H1 (cell line): ENCODE measurements at regions of chr13 and their contacts with region 1.

Region 1: GRCh38 chr13:112366907-112367646 is 9.1 kb upstream of the SPACA7 start:
- DNase-seq: no peak
- H3K4me3 ChIP-seq: no peak overlapping the region
- H3K27ac ChIP-seq: no peak overlapping the region
- H3K4me1 ChIP-seq: peaks cover 0 to 8% (median 4%) of the 10 kb centered on the region in 4 experiments; a peak in 5 of 7 replicates
- H3K27me3 ChIP-seq: no peaks in the 10 kb centered on the region
- CTCF ChIP-seq: peak in 2 of 3 experiments; percentile 5 to 18; a peak in 3 of 4 replicates
- EP300 ChIP-seq: no peak
- POLR2A ChIP-seq: no peak
- RAD21 ChIP-seq: peak; percentile 18 to 43; a peak in 2 of 4 replicates

Region 2: GRCh38 chr13:112346173-112346898 is 20.7 kb before region 1 on chr13:
- CTCF ChIA-PET with region 1: interaction called, 12 read pairs
- POLR2A ChIA-PET with region 1: no interaction called
- DNase-seq: peak in 1 of 2 experiments; percentile 68
- H3K4me3 ChIP-seq: 0 out of 8 replicates have a peak overlapping the region, but pooled peaks of 1 of the 4 experiments have one; percentile 5
- H3K27ac ChIP-seq: no peak overlapping the region
- H3K4me1 ChIP-seq: peaks cover 7 to 31% (median 20%) of the 10 kb centered on the region in 4 experiments
- H3K27me3 ChIP-seq: peaks cover 0 to 22% (median 12%) of the 10 kb centered on the region in 4 experiments; a peak in 4 of 7 replicates
- CTCF ChIP-seq: peak in 2 of 3 experiments; percentile 5 to 16; a peak in 3 of 4 replicates
- EP300 ChIP-seq: no peak
- POLR2A ChIP-seq: no peak
- RAD21 ChIP-seq: peak; percentile 5 to 28; a peak in 1 of 4 replicates